Activated CD4-positive, alpha-beta T cell treated with anti-CD3 and anti-CD28 coated beads for 36 hours (primary cell): ENCODE measurements at regions of chr3 and their contacts with region 1.

Region 1: GRCh38 chr3:22565393-22565792 is 637.7 kb upstream of the UBE2E2 start:
- DNase-seq: no peak
- ATAC-seq: no peak
- H3K4me3 Mint-ChIP-seq: no peak overlapping the region
- H3K27ac Mint-ChIP-seq: no peak overlapping the region
- H3K4me1 Mint-ChIP-seq: no peaks in the 10 kb centered on the region
- H3K27me3 Mint-ChIP-seq: no peaks in the 10 kb centered on the region

Region 2: DNA sequence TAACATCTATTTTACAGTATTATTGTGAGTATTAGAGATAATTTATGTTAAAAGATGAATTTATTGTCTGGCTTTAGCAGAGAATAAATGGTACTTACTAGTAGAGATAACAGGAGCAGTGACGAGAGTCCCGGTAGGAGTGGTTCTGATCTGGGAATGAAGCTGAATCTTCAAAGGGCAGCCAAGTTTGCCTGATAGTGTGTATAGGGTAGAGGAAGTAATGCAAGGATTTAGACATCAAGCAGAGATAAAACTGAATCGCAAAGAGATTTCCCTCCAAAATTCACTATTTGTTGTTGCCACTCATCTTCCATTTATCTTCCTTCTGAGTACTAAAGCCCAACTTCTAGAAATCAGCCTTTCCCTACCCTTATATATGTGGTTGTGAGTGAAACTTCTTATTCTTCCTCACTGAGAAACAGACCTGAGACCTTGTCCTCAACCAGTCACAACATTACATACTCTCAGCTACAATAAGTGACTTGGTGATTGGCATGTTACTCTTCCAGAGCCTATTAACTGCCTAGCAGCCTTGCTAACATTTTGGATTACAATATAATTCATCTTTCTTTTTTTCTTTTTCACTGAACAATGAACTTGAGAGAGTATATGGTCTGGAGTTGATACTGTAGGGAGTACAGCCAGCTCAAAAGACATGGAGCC is 121.7 kb before region 1 on chr3:
- CTCF ChIA-PET with region 1: no interaction called
- POLR2A ChIA-PET with region 1: no interaction called
- intact Hi-C with region 1: no loop called
- DNase-seq: no peak
- ATAC-seq: no peak
- H3K4me3 Mint-ChIP-seq: no peak overlapping the region
- H3K27ac Mint-ChIP-seq: no peak overlapping the region
- H3K4me1 Mint-ChIP-seq: no peaks in the 10 kb centered on the region
- H3K27me3 Mint-ChIP-seq: no peaks in the 10 kb centered on the region

Region 3: GRCh38 chr3:22615790-22616189 is 50.4 kb after region 1 on chr3:
- CTCF ChIA-PET with region 1: no interaction called
- POLR2A ChIA-PET with region 1: no interaction called
- intact Hi-C with region 1: no loop called
- DNase-seq: no peak
- ATAC-seq: no peak
- H3K4me3 Mint-ChIP-seq: no peak overlapping the region
- H3K27ac Mint-ChIP-seq: no peak overlapping the region
- H3K4me1 Mint-ChIP-seq: no peaks in the 10 kb centered on the region
- H3K27me3 Mint-ChIP-seq: no peaks in the 10 kb centered on the region

Region 4: GRCh38 chr3:22887664-22888291 is 322.4 kb after region 1 on chr3:
- CTCF ChIA-PET with region 1: interaction called, 4 read pairs
- POLR2A ChIA-PET with region 1: no interaction called
- intact Hi-C with region 1: loop called (anchors 1 to 10 kb)
- DNase-seq: peak; percentile 6
- ATAC-seq: no peak
- H3K4me3 Mint-ChIP-seq: no peak overlapping the region
- H3K27ac Mint-ChIP-seq: no peak overlapping the region
- H3K4me1 Mint-ChIP-seq: no peaks in the 10 kb centered on the region
- H3K27me3 Mint-ChIP-seq: no peaks in the 10 kb centered on the region

Region 5: DNA sequence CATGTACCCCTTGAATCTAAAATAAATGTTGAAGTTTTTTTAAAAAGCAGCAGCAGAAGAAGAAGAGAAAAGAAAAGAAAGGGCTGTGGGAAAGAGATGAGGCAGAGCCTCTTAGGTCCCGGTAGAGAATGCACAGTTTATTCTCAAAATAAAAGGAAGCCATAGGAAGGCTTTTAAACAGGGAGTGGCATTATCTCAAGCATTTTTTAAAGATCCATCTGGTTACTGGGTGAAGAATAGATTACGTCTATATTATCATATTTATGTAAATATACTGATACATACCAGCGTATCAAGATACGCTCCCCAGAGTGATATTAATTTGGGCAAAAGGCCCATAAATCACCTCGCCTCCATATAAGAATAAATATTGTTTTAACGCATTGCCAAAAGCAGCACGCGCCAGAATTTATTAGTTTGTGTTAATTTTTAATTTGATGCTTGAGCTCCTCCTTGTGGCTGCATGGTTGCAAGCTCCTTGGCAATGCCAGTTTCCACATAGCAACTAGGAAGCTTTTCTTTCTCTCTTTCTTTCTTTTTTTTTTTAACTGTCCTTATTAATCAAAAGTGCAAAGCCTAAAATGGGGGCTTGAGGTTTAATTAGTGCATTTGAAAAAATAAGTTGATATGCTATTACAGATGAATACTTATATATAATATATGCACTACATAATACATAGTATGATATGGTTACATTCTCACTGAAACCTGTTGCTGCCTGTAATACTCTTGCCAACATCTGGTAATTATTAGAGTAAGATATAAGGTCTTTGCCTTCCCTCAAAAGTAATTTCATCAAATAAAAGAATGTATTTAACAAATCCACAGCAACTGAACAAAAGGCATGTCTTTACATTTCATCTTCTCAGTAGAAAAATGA is 395.0 kb after region 1 on chr3:
- CTCF ChIA-PET with region 1: interaction called, 3 read pairs
- POLR2A ChIA-PET with region 1: no interaction called
- intact Hi-C with region 1: loop called (anchors 1 to 10 kb)
- DNase-seq: peak; percentile 32
- ATAC-seq: no peak
- H3K4me3 Mint-ChIP-seq: no peak overlapping the region
- H3K27ac Mint-ChIP-seq: no peak overlapping the region
- H3K4me1 Mint-ChIP-seq: peaks cover 6% of the 10 kb centered on the region
- H3K27me3 Mint-ChIP-seq: no peaks in the 10 kb centered on the region